Activated CD8-positive, alpha-beta T cell treated with anti-CD3 and anti-CD28 coated beads for 36 hours (primary cell): ENCODE measurements at regions of chr1 and their contacts with region 1.

Region 1: GRCh38 chr1:54791880-54792522 is 9.1 kb downstream of the TTC22 start:
- DNase-seq: peak; percentile 83
- ATAC-seq: peak; percentile 67
- H3K4me3 Mint-ChIP-seq: no peak overlapping the region
- H3K27ac Mint-ChIP-seq: no peak overlapping the region
- H3K4me1 Mint-ChIP-seq: peaks cover 7% of the 10 kb centered on the region
- H3K27me3 Mint-ChIP-seq: no peaks in the 10 kb centered on the region
- CTCF ChIP-seq: peak; percentile 85

Region 2: GRCh38 chr1:54671985-54672608 is 119.9 kb before region 1 on chr1:
- CTCF ChIA-PET with region 1: interaction called, 7 read pairs
- POLR2A ChIA-PET with region 1: no interaction called
- intact Hi-C with region 1: loop called (anchors 5 kb)
- DNase-seq: peak; percentile 85
- ATAC-seq: peak; percentile 99
- H3K4me3 Mint-ChIP-seq: no peak overlapping the region
- H3K27ac Mint-ChIP-seq: no peak overlapping the region
- H3K4me1 Mint-ChIP-seq: peaks cover 4% of the 10 kb centered on the region
- H3K27me3 Mint-ChIP-seq: no peaks in the 10 kb centered on the region
- CTCF ChIP-seq: peak; percentile 96

Region 3: GRCh38 chr1:54697896-54698295 is 94.1 kb before region 1 on chr1:
- CTCF ChIA-PET with region 1: no interaction called
- POLR2A ChIA-PET with region 1: no interaction called
- intact Hi-C with region 1: no loop called
- DNase-seq: no peak
- ATAC-seq: no peak
- H3K4me3 Mint-ChIP-seq: no peak overlapping the region
- H3K27ac Mint-ChIP-seq: no peak overlapping the region
- H3K4me1 Mint-ChIP-seq: peaks cover 3% of the 10 kb centered on the region
- H3K27me3 Mint-ChIP-seq: peaks cover 5% of the 10 kb centered on the region
- CTCF ChIP-seq: no peak

Region 4: GRCh38 chr1:54728027-54728426 is 64.0 kb before region 1 on chr1:
- CTCF ChIA-PET with region 1: no interaction called
- POLR2A ChIA-PET with region 1: no interaction called
- intact Hi-C with region 1: no loop called
- DNase-seq: no peak
- ATAC-seq: no peak
- H3K4me3 Mint-ChIP-seq: no peak overlapping the region
- H3K27ac Mint-ChIP-seq: no peak overlapping the region
- H3K4me1 Mint-ChIP-seq: no peaks in the 10 kb centered on the region
- H3K27me3 Mint-ChIP-seq: no peaks in the 10 kb centered on the region
- CTCF ChIP-seq: no peak

Region 5: GRCh38 chr1:54810100-54810942 is 18.3 kb after region 1 on chr1:
- CTCF ChIA-PET with region 1: interaction called, 11 read pairs
- POLR2A ChIA-PET with region 1: interaction called, 5 read pairs
- intact Hi-C with region 1: no loop called
- DNase-seq: peak; percentile 80
- ATAC-seq: peak; percentile 91
- H3K4me3 Mint-ChIP-seq: no peak overlapping the region
- H3K27ac Mint-ChIP-seq: no peak overlapping the region
- H3K4me1 Mint-ChIP-seq: peaks cover under 1% of the 10 kb centered on the region
- H3K27me3 Mint-ChIP-seq: no peaks in the 10 kb centered on the region
- CTCF ChIP-seq: peak; percentile 81

Region 6: GRCh38 chr1:54927472-54928240 is 135.7 kb after region 1 on chr1:
- CTCF ChIA-PET with region 1: no interaction called
- POLR2A ChIA-PET with region 1: no interaction called
- intact Hi-C with region 1: no loop called
- DNase-seq: no peak
- ATAC-seq: no peak
- H3K4me3 Mint-ChIP-seq: no peak overlapping the region
- H3K27ac Mint-ChIP-seq: no peak overlapping the region
- H3K4me1 Mint-ChIP-seq: no peaks in the 10 kb centered on the region
- H3K27me3 Mint-ChIP-seq: peaks cover 2% of the 10 kb centered on the region
- CTCF ChIP-seq: no peak